H1 (cell line): ENCODE measurements at regions of chr1 and their contacts with region 1.

Region 1: DNA sequence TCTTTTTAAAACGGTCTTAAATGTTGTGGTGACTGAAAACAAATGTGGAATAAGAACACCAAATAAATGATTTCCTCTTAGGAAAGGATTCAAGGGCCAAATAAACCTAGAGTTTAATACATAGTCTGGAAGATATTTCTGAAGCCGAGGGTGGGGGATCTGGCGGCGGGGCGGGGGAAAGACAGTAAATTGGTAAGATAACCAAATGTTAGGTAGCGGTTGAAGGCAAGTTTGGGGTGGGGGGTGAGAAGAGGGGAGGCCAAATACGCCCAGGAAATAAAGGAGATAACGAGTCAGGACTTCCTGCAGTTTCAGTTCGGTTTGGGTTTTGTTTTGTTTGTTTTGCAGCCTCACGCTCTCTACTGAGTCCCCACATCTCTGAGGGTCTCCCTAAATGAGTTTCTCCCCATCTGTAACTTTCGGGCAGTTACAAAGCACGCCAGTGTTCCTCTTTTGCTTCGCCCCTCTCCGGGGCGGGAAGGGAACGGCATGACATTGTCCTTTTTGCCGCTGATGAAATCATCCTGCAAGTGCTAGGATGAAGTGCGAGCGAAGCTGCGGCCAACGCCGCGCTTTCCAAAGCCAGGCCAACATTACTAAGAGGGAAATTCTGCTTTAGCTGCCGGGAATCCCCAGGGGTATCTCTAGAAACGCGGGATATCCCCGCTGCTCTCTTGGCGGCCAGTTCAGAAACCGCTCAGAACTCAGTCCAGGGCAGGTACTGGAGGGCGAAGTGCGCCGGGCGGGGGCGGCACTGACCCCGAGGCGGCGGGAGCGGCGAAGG is 844 bp downstream of the NIBAN1 start:
- DNase-seq: peak in 1 of 2 experiments; percentile 77
- H3K4me3 ChIP-seq: peak overlapping the region; percentile 62 to 91 (median 72)
- H3K27ac ChIP-seq: no peak overlapping the region
- H3K4me1 ChIP-seq: peaks cover 0 to 5% (median 1%) of the 10 kb centered on the region in 4 experiments; a peak in 3 of 7 replicates
- H3K27me3 ChIP-seq: peaks cover 3 to 22% (median 14%) of the 10 kb centered on the region in 4 experiments
- CTCF ChIP-seq: no peak
- EP300 ChIP-seq: no peak
- POLR2A ChIP-seq: peak; percentile 39 to 47; a peak in 2 of 3 replicates
- RAD21 ChIP-seq: no peak

Region 2: GRCh38 chr1:184860985-184861759 is 112.3 kb before region 1 on chr1:
- CTCF ChIA-PET with region 1: no interaction called
- POLR2A ChIA-PET with region 1: no interaction called
- DNase-seq: no peak
- H3K4me3 ChIP-seq: no peak overlapping the region
- H3K27ac ChIP-seq: no peak overlapping the region
- H3K4me1 ChIP-seq: no peaks in the 10 kb centered on the region
- H3K27me3 ChIP-seq: no peaks in the 10 kb centered on the region
- CTCF ChIP-seq: no peak
- EP300 ChIP-seq: no peak
- POLR2A ChIP-seq: no peak
- RAD21 ChIP-seq: no peak

Region 3: DNA sequence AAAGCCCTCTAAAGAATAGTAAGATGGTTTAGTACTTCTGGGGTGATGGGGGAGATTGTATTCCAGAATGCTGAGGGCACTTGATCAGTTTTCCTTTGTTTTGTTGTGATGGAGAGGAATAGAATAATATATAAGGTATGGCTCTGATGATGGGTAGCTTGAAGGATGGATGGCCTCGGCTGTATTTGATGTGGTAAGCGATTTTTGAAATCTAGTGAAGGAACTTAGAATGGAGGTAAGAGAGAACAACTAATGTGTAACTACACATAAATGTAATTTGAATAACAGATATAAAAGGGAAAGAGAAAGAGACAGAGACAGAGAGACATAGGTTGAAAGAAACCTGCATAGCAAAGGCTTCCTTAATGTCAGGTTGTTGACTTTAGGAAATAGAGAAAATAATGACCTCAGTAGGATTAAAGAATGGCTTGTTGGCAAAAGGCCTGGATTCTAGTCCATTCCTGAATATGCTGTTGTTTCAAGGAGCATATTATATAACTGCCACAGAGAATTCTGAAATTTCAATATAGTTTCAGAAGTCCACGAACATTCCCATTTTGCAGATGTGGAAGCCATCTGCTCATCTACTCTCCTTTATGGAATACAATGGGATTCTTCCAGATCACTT is 57.9 kb before region 1 on chr1:
- CTCF ChIA-PET with region 1: no interaction called
- POLR2A ChIA-PET with region 1: no interaction called
- DNase-seq: no peak
- H3K4me3 ChIP-seq: no peak overlapping the region
- H3K27ac ChIP-seq: no peak overlapping the region
- H3K4me1 ChIP-seq: peaks cover 0 to 3% (median 0%) of the 10 kb centered on the region in 4 experiments; a peak in 1 of 7 replicates
- H3K27me3 ChIP-seq: no peaks in the 10 kb centered on the region
- CTCF ChIP-seq: no peak
- EP300 ChIP-seq: no peak
- POLR2A ChIP-seq: no peak
- RAD21 ChIP-seq: no peak

Region 4: GRCh38 chr1:184935920-184936798 is 37.3 kb before region 1 on chr1:
- CTCF ChIA-PET with region 1: no interaction called
- POLR2A ChIA-PET with region 1: no interaction called
- DNase-seq: no peak
- H3K4me3 ChIP-seq: no peak overlapping the region
- H3K27ac ChIP-seq: no peak overlapping the region
- H3K4me1 ChIP-seq: peaks cover 0 to 8% (median 5%) of the 10 kb centered on the region in 4 experiments; a peak in 4 of 7 replicates
- H3K27me3 ChIP-seq: no peaks in the 10 kb centered on the region
- CTCF ChIP-seq: no peak
- EP300 ChIP-seq: no peak
- POLR2A ChIP-seq: no peak
- RAD21 ChIP-seq: no peak

Region 5: DNA sequence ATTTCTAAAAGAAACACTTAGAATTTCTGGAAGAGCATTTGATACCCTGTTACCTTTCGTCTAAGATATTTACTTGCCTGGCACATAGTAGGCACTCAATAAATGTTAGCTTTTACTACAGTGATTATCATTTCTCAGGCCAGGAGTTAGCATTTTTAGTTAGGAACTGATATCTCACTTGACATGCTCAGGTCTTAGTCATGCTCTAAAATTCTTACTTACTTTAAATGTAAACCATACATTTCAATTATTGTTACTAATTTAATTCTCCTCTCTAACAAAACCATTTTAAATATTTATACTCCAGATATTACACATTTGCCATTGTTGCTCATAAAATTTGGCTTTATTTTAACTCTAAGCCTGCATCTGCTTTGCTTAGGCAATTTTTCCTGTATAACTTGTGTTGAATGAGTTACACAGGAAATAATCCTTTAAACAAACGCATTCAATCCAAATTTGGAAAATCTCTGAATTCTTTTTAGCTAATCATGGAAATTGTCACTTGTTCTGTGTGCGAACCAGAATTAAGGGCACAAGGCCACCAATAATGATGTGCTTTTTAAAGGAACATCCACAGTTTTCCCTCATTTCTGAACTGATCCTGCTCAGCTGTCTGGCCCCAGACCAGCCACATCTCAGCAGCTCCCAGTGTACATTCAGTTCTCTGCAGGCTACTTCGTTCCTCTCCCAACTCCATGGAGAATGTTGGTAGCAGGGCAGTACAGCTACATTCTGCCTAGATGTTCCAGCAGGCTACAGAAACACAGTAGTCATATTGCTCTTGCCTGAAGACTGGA is 14.7 kb before region 1 on chr1:
- CTCF ChIA-PET with region 1: interaction called, 7 read pairs
- POLR2A ChIA-PET with region 1: interaction called, 23 read pairs
- DNase-seq: no peak
- H3K4me3 ChIP-seq: no peak overlapping the region
- H3K27ac ChIP-seq: no peak overlapping the region
- H3K4me1 ChIP-seq: no peaks in the 10 kb centered on the region
- H3K27me3 ChIP-seq: no peaks in the 10 kb centered on the region
- CTCF ChIP-seq: no peak
- EP300 ChIP-seq: no peak
- POLR2A ChIP-seq: no peak
- RAD21 ChIP-seq: no peak